ENCODE measurements at regions of chr17 and their contacts with region 1.

Region 1: DNA sequence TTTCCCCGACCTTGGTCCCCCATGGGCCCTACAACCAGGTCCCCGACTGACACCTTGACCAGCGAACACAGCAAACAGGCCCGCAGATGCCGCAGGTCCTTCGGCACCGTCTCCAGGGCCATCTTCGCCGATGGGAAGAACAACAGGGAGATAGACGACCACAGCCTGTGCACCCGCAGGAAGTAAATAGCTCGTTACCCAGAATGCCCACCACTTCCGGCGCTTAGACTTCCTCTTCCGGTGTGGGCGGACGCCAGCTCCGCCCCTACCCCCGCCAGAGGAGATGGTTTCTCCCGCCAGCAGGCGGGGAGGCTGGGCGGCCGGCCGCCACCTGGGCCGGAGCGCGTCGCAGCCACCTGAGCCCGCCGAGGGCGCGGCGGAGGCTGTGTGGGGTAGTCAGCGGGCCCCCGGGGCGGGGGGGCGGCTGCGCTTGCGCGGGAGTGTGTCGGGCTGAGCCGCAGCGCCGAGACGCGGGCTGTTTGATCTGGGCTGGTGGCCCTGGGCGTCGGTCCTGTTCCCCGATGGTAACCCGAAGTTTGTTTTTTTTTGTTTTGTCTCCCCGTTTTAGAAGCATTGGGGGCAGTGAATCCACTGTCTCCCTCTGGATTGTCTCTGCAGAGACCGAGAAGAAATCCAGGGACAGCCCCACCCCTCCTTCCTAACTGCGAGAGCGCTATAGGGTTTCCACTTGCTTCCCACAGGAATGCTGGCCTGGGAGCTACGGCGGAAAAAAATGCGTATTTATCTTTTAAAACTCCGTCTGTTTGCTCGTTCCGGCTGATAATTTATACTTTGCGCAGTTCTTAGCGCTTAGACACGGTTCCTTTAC is at the start of gene SUPT4H1:
- DNase-seq: peak; percentile 99
- H3K4me3 ChIP-seq: peak within 1 kb of the TSS; percentile 74 to 99
- H3K27ac ChIP-seq: peak within 1 kb of the TSS; percentile 69 to 80
- H3K4me1 ChIP-seq: peaks cover 0 to 10% of the 10 kb centered on the region in 2 experiments; a peak in 2 of 4 replicates
- H3K27me3 ChIP-seq: no peaks in the 10 kb centered on the region
- CTCF ChIP-seq: no peak
- EP300 ChIP-seq: peak; percentile 1 to 51; a peak in 1 of 4 replicates
- RAD21 ChIP-seq: no peak
- polyA plus RNA-seq, gene SUPT4H1: 165 and 205 TPM in 2 replicates

Region 2: DNA sequence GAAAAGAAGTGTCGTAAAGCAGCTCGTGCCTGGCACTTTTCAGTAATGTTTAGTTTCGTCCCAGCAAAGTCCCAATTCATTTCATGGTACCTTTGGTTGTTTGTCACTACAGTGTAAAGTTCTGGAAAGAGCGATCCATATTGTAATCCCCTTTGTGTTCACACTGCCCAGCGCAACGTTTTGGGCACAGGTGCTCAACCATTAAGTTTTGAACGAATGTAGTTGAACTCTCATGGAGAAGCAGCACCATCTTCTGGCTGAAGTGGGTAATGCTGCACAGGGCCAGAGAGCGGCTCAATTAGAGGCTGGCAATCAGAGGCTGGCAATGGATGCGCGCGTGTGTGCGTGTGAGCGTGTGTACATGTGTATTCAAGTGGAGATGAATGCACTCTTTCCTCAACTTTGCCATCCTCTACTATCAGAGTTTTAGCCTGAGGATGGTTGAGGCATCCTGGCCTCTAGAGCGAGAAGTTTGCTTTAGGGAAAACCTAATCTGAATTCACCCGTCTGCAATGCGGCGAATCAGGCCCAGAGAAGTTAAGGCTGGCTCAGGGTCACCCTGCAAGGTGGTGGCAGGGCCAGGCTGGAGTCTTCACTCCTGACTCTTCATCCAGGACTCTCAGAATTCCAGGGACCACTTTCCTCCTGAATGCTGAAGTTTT is 239.1 kb before region 1 on chr17:
- CTCF ChIA-PET with region 1: no interaction called
- POLR2A ChIA-PET with region 1: no interaction called
- DNase-seq: peak; percentile 79
- H3K4me3 ChIP-seq: no peak overlapping the region
- H3K27ac ChIP-seq: no peak overlapping the region
- H3K4me1 ChIP-seq: no peaks in the 10 kb centered on the region
- H3K27me3 ChIP-seq: 0 out of 2 replicates have a peak, but pooled peaks cover 18% of the 10 kb centered on the region
- CTCF ChIP-seq: peak; percentile 99
- EP300 ChIP-seq: no peak
- RAD21 ChIP-seq: peak; percentile 99

Region 3: DNA sequence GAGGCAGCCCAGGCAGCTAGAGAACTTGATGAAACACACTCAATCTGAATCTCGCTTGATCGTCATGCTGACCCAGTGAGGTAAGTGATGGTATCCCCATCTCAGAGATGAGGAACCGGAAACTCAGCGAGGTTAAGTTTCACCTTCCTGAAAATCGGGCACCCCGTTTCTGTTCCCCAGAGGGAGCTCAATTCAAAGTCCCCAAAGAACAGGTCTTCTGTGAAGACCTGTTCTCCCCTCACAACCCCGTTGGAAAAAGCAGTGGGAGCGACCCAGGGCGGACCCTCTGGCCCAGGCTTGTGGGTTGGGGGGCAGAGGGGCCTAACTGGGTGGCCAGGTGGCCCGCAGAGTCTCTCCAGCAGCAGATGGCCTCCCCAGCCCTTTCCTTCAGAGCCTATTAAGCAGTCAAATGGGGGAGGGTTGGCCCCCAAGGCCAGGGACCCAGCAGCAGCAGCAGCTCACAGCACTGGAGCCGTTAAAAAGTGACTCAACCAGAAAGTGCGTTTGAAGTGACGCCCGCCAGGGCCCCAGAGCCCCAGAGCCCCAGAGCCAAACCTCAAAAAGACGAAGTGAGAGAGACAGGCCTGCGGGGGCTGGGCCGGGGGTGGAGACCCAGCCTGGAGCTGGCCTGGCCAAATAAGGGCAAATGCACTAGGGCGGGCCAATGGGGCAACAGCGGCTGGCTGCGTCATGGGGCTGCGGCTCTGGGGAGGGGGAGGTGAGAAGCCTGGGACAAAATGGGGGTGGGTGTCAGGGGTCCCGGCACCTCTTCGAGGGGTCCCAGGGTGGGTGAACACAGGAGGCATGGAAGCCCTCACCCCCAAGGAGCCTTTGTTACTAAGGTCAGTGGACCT is 14.4 kb before region 1 on chr17:
- CTCF ChIA-PET with region 1: interaction called, 7 read pairs
- POLR2A ChIA-PET with region 1: interaction called, 23 read pairs
- DNase-seq: no peak
- H3K4me3 ChIP-seq: no peak overlapping the region
- H3K27ac ChIP-seq: no peak overlapping the region
- H3K4me1 ChIP-seq: peaks cover 0 to 34% of the 10 kb centered on the region in 2 experiments; a peak in 1 of 4 replicates
- H3K27me3 ChIP-seq: no peaks in the 10 kb centered on the region
- CTCF ChIP-seq: no peak
- EP300 ChIP-seq: no peak
- RAD21 ChIP-seq: no peak

Region 4: GRCh38 chr17:58364270-58364942 is 12.2 kb after region 1 on chr17:
- CTCF ChIA-PET with region 1: interaction called, 5 read pairs
- POLR2A ChIA-PET with region 1: interaction called, 11 read pairs
- DNase-seq: no peak
- H3K4me3 ChIP-seq: no peak overlapping the region
- H3K27ac ChIP-seq: no peak overlapping the region
- H3K4me1 ChIP-seq: peaks cover 0 to 2% of the 10 kb centered on the region in 2 experiments; a peak in 1 of 4 replicates
- H3K27me3 ChIP-seq: peaks cover 32% of the 10 kb centered on the region; the same call in 1 of the 2 replicates
- CTCF ChIP-seq: no peak
- EP300 ChIP-seq: no peak
- RAD21 ChIP-seq: no peak

Region 5: DNA sequence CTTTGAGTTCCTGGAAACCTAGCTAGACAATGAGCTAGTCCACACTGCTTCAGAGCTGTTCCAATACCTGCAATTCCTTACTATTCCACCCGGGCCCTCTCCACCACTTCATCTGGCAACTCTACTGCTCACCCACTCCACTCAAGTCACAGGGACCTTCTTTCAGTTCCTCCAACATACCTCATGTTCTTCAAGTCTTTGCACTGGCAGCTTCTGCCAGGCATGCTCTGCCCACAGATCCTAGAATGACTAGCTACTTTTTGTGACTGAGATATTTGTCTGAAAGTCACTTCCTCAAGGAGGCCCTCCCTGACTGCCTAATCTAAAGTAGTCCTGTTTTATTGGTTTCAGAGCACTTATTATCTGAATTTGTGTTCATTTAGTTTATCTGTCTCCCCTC is 253.2 kb after region 1 on chr17:
- CTCF ChIA-PET with region 1: no interaction called
- POLR2A ChIA-PET with region 1: no interaction called
- DNase-seq: no peak
- H3K4me3 ChIP-seq: no peak overlapping the region
- H3K27ac ChIP-seq: no peak overlapping the region
- H3K4me1 ChIP-seq: no peaks in the 10 kb centered on the region; a peak in 1 of 4 replicates
- H3K27me3 ChIP-seq: no peaks in the 10 kb centered on the region
- CTCF ChIP-seq: no peak
- EP300 ChIP-seq: no peak
- RAD21 ChIP-seq: no peak